ENCODE measurements at regions of chr15 and their contacts with region 1.

Region 1: GRCh38 chr15:61879219-61879618 is 181.0 kb downstream of the VPS13C start:
- DNase-seq: peak; percentile 85
- H3K4me3 Mint-ChIP-seq: no peak overlapping the region
- H3K27ac Mint-ChIP-seq: peak overlapping the region; percentile 75
- H3K4me1 Mint-ChIP-seq: peaks cover 43% of the 10 kb centered on the region
- H3K27me3 Mint-ChIP-seq: no peaks in the 10 kb centered on the region
- CTCF ChIP-seq: no peak

Region 2: GRCh38 chr15:61479613-61480012 is 399.6 kb before region 1 on chr15:
- CTCF ChIA-PET with region 1: no interaction called
- intact Hi-C with region 1: no loop called
- DNase-seq: no peak
- H3K4me3 Mint-ChIP-seq: no peak overlapping the region
- H3K27ac Mint-ChIP-seq: no peak overlapping the region
- H3K4me1 Mint-ChIP-seq: no peaks in the 10 kb centered on the region
- H3K27me3 Mint-ChIP-seq: peaks cover 60% of the 10 kb centered on the region
- CTCF ChIP-seq: no peak

Region 3: GRCh38 chr15:61906961-61907752 is 27.9 kb after region 1 on chr15:
- CTCF ChIA-PET with region 1: interaction called, 6 read pairs
- intact Hi-C with region 1: loop called (anchors 1 kb)
- DNase-seq: peak; percentile 37
- H3K4me3 Mint-ChIP-seq: peak overlapping the region; percentile 22
- H3K27ac Mint-ChIP-seq: peak overlapping the region; percentile 63
- H3K4me1 Mint-ChIP-seq: peaks cover 49% of the 10 kb centered on the region
- H3K27me3 Mint-ChIP-seq: no peaks in the 10 kb centered on the region
- CTCF ChIP-seq: no peak

Region 4: DNA sequence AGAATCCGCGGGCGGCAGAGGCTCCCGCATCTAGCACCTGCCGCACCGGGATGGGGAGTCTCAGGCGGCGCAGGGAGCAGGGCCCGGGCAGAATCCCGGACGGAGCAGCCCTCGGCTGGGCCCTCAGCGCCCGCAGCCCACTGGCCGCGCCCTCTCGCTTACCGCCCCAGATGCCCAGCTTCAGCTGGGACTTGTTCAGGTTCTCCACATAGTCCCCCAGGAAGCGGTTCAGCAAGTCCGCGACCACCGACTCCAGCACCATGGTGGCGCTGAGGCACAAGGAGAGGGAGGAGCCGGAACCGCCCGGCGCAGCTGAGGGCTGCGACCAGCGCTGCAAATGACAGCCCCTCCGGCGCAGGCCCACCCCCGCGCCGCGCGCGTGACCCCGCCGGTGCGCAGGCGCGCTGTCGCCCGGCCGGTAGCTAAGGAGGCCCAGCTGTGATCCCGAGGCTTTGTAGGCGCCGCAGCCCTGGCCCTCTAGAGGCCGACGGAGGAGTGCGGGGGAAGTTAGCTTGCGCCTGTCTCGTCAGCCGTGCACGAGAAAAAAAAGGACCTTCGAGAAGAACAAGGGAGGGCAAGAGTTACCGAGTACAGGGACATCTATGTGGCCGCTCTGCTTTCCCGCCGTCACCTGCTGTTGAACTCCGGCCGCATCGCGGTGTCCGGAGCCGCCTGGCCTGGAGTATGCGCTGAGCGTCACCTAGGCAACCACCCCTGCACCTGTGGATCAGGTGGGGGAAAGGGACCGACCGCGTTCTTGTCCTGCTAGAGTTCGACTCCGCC is 181.1 kb after region 1 on chr15 and contains the start of gene VPS13C:
- CTCF ChIA-PET with region 1: interaction called, 6 read pairs
- intact Hi-C with region 1: loop called (anchors 5 kb)
- DNase-seq: peak; percentile 97
- H3K4me3 Mint-ChIP-seq: peak within 1 kb of the TSS; percentile 93
- H3K27ac Mint-ChIP-seq: peak within 1 kb of the TSS; percentile 25
- H3K4me1 Mint-ChIP-seq: peaks cover 64% of the 10 kb centered on the region
- H3K27me3 Mint-ChIP-seq: no peaks in the 10 kb centered on the region
- CTCF ChIP-seq: peak; percentile 84
- total RNA-seq, gene VPS13C: 99.9 and 101 TPM in 2 replicates

Region 5: GRCh38 chr15:62066663-62067447 is 187.6 kb after region 1 on chr15 and contains the start of gene C2CD4A:
- CTCF ChIA-PET with region 1: interaction called, 6 read pairs
- intact Hi-C with region 1: loop called (anchors 2 kb)
- DNase-seq: peak; percentile 96
- H3K4me3 Mint-ChIP-seq: peak within 1 kb of the TSS; percentile 89
- H3K27ac Mint-ChIP-seq: peak within 1 kb of the TSS; percentile 91
- H3K4me1 Mint-ChIP-seq: peaks cover 48% of the 10 kb centered on the region
- H3K27me3 Mint-ChIP-seq: no peaks in the 10 kb centered on the region
- CTCF ChIP-seq: no peak
- total RNA-seq, gene C2CD4A: 17.1 and 17.6 TPM in 2 replicates